ENCODE measurements at regions of chr13 and their contacts with region 1.

Region 1: DNA sequence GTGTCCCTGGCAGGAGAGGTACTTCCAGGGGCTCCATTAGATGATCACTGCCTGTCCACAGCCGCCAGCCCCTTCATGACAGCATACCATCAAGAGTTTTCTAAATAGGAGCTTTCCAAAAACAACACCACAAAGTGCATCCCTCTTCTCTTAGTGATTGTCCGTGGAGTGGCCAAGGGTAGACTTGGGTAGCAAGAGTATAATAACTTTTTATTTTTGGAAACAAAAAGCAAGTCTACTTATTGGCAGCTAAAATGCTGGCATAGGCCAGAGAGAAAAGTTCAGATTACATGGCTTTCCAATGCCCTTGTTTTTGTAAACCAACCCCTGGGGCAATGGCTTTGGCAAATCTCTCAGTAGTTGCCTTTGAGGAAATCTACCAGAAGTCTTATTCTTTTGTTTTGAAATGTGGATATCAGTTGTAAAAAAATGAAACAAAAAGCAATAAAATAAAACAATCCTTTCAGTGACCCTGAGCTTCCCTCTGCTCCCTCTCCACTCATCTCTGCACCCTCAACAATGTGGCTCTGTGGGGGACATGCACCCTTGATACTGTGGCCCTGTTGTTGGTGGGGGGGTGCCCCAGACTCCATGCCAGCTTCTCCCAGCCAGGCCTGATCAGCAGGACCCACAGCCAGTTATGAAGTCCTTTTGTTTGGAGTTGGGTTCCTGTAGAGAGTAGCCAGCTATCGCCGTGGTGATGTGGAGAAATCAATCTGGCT is 294.1 kb downstream of the DLEU7 start:
- DNase-seq: no peak
- H3K4me3 ChIP-seq: no peak overlapping the region
- H3K27ac ChIP-seq: peak overlapping the region in 1 of 2 donors; percentile 5
- H3K4me1 ChIP-seq: peaks cover 0 to 5% of the 10 kb centered on the region in 2 donors
- H3K27me3 ChIP-seq: no peaks in the 10 kb centered on the region
- CTCF ChIP-seq: no peak

Region 2: DNA sequence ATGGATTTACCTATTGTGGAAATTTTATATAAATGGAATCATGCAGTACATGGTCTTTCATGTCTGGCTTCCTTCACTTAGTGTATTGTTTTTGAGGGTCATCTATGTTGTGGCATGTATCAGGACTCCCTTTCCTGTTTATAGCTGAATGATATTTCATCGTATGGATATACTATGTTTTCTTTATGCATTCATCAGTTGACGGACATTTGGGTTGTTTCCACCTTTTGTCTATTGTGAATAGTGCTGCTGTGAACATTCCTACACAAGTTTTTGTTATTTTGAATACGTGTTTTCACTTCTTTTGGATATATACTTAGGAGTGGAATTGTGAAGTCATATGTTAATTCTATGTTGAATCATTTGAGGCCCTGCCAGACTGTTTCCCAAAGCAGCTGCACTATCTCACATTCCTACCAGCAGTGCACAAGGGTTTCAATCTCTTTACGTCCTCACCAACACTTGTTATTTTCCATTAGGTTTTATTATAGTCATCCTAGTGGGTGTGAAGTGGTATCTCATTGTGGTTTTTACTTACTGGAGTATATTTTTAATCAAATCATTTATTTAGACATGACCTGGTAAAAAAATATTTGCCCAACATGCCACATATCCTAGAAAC is 31.4 kb after region 1 on chr13:
- intact Hi-C with region 1: loop called (anchors 1 kb)
- DNase-seq: no peak
- H3K4me3 ChIP-seq: no peak overlapping the region
- H3K27ac ChIP-seq: peak overlapping the region; percentile 50 to 62
- H3K4me1 ChIP-seq: peaks cover 0 to 6% of the 10 kb centered on the region in 2 donors
- H3K27me3 ChIP-seq: no peaks in the 10 kb centered on the region
- CTCF ChIP-seq: no peak

Measured in ascending aorta (tissue), 2 donors.